GM10248 (cell line): ENCODE measurements at regions of chr1 and their contacts with region 1.

Region 1: DNA sequence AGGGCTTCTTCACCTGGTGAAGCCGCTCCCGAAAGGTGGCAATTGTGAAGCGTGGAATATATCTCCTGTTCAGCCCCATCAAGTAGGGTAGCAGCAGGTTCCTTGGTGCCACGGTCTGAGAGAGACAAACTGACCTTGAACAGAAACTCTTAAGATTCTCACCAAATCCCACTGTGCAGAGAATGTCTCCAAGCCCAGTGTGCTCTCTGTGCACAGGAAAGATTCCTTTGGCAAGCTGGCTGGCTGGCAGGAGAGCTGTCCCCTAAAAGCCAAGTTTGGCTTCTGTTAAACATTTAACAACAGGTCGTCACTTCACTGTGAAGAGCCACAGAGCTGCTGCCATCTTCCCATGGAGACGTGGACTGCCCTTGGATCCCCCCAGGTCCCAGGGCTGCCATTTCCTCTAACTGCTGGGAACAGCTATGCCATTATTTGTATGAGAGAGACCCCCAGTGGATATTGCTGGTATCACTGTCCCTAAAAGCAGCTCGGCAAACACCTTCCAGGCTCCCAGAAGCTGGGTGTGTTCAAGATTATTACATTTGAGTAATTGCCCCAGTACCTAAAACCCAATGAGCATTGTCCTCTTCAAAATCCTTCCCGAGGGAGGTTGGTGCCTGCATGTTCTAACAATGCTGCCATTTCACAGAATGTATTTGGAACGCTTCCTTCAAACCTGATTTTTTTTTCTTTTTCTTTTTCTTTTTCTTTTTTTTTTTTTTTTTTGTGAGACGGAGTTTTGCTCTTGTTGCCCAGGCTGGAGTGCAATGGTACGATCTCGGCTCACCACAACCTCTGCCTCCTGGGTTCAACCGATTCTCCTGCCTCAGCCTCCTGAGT is 71.8 kb downstream of the CD58 start:
- DNase-seq: peak; percentile 70
- CTCF ChIP-seq: peak; percentile 75

Region 2: DNA sequence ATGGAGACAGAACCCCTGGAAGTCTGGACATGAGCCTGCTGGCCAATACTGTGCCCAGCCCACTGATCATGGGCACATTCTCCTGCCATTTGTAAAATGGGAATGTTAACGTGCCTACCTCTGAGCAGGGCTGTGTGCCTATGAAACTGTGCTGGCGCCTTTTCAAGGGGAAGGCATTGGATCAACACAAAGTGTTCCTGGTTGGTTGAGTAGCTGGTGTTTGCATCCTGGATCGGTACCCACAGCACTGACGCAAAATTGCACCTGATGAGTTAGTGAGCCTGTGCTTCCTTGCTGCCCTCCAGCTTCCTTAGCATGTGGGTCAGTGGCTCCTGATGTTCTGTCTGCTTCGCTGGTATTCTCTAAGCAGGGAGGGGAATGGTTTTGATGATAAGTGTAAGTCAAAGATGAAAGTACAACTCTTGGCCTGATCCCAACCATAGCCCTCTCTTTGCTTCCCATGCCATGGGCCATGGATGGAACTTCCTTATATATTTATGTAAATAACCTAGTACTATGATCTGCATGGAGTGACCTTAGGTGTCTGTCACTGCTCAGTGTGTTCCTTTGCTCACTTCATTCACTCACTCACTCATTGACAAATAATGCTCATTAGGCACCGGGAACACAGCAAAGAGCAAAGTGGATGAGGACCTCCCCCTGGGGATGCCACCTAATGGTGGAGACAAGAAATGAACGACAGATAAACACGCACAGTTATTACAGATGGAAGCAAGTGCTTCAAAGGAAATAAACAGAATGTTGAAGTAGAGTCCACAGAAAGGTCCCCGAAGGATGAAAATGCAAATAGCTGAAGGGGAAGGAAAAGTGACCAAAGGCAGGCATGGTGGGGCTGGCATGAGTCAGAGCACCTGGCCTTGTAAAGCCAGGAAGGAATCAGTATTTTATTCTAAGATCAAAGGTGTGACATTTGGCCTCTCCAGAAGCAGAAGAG is 365.0 kb before region 1 on chr1:
- CTCF ChIA-PET with region 1: interaction called, 193 read pairs
- POLR2A ChIA-PET with region 1: no interaction called
- DNase-seq: no peak
- CTCF ChIP-seq: no peak

Region 3: GRCh38 chr1:116151739-116152576 is 347.1 kb before region 1 on chr1:
- CTCF ChIA-PET with region 1: interaction called, 18 read pairs
- POLR2A ChIA-PET with region 1: no interaction called
- DNase-seq: peak; percentile 93
- CTCF ChIP-seq: peak; percentile 97

Region 4: GRCh38 chr1:116360429-116361173 is 138.4 kb before region 1 on chr1:
- CTCF ChIA-PET with region 1: interaction called, 12 read pairs
- POLR2A ChIA-PET with region 1: no interaction called
- DNase-seq: peak; percentile 32
- CTCF ChIP-seq: peak; percentile 12

Region 5: GRCh38 chr1:116372587-116373444 is 126.2 kb before region 1 on chr1 and contains the start of gene ATP1A1:
- CTCF ChIA-PET with region 1: interaction called, 12 read pairs
- POLR2A ChIA-PET with region 1: interaction called, 3 read pairs
- DNase-seq: peak; percentile 98
- CTCF ChIP-seq: no peak

Region 6: GRCh38 chr1:116465845-116466685 is 32.9 kb before region 1 on chr1:
- CTCF ChIA-PET with region 1: no interaction called
- POLR2A ChIA-PET with region 1: no interaction called
- DNase-seq: no peak
- CTCF ChIP-seq: no peak

Region 7: DNA sequence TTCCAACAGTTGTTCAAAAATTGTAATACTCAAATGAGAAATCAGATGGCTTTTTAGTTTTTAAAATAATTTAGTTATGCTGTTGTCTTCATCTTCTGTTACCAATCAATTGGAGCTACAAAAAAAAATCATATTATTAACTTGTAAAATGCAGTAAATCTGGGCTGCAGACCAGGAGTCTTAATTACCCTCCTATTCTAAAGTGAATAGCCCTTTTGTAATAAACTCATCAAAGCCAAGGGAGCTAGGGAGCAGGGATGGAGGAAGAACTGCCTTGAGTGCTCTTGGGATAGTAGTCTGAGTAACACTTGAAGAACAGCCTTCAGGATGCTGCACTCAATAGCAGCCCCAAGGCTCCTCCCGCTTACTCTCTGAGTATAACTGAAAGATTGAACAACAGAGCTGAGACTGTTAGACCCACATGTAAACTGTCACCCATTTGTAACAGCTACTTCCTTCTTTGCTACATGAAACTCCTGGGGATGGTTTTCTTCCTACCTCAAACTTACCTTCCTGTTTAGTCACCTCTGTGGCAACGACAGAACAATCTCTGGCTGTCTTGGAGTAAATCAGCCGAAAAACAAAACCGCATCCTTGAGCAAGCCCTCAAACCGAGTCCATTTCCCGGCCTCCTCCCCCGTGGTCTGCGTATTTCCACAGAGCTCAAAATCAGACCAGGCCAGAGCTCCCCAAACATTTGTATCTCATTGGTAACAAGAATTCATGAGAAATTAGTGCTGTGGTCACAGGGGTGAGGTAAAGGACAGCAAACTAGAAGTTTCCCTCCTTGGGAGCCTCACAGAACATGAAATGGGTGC is 15.9 kb after region 1 on chr1:
- CTCF ChIA-PET with region 1: interaction called, 54 read pairs
- POLR2A ChIA-PET with region 1: interaction called, 3 read pairs
- DNase-seq: peak; percentile 63
- CTCF ChIP-seq: no peak